CD4-positive, alpha-beta memory T cell (primary cell): ENCODE measurements at regions of chr15 and their contacts with region 1.

Region 1: GRCh38 chr15:59688841-59689625 is at the start of gene BNIP2:
- DNase-seq: peak; percentile 99 to 100 (median 99)
- H3K4me3 ChIP-seq: peak within 1 kb of the TSS; percentile 94 to 100
- H3K4me3 Mint-ChIP-seq: peak within 1 kb of the TSS; percentile 88 to 99 (median 94)
- H3K27ac ChIP-seq: peak within 1 kb of the TSS; percentile 100
- H3K27ac Mint-ChIP-seq: peak within 1 kb of the TSS; percentile 89 to 99 (median 99)
- H3K4me1 ChIP-seq: peaks cover 46% of the 10 kb centered on the region
- H3K4me1 Mint-ChIP-seq: peaks cover 29 to 61% (median 40%) of the 10 kb centered on the region in 4 donors
- H3K27me3 ChIP-seq: no peaks in the 10 kb centered on the region
- H3K27me3 Mint-ChIP-seq: no peaks in the 10 kb centered on the region
- total RNA-seq, gene BNIP2: 86.9 to 87.9 TPM

Region 2: GRCh38 chr15:58987489-58988005 is 701.5 kb before region 1 on chr15 and contains the start of gene RNF111:
- CTCF ChIA-PET with region 1: no interaction called
- POLR2A ChIA-PET with region 1: no interaction called
- intact Hi-C with region 1: loop called (anchors 10 kb)
- DNase-seq: peak; percentile 90 to 97 (median 91)
- H3K4me3 ChIP-seq: peak within 1 kb of the TSS; percentile 91 to 92
- H3K4me3 Mint-ChIP-seq: peak within 1 kb of the TSS; percentile 93 to 98 (median 96)
- H3K27ac ChIP-seq: peak within 1 kb of the TSS; percentile 89
- H3K27ac Mint-ChIP-seq: peak within 1 kb of the TSS; percentile 84 to 97 (median 94)
- H3K4me1 ChIP-seq: peaks cover 40% of the 10 kb centered on the region
- H3K4me1 Mint-ChIP-seq: peaks cover 31 to 52% (median 42%) of the 10 kb centered on the region in 4 donors
- H3K27me3 ChIP-seq: no peaks in the 10 kb centered on the region
- H3K27me3 Mint-ChIP-seq: no peaks in the 10 kb centered on the region
- total RNA-seq, gene RNF111: 54.9 to 60.9 TPM

Region 3: DNA sequence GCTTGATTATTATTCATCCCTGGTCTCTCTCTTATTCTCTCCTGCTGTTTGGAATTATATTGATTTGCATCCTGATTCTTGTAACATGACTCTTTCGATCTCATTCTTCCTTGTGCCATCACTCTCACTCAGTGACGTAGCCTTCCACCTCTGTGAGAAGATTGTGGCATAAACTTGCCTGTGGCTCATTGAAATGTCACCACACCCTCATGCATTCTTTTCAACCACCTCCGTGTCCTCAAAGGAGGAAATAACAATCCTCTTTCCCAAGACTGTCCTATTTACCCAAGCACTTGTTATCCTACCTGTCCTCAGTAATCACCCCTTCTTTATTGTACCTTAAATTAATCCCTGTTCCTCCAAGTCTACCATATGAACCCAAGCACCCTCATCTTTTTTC is 118.7 kb before region 1 on chr15:
- CTCF ChIA-PET with region 1: no interaction called
- POLR2A ChIA-PET with region 1: no interaction called
- intact Hi-C with region 1: no loop called
- DNase-seq: no peak
- H3K4me3 ChIP-seq: no peak overlapping the region
- H3K4me3 Mint-ChIP-seq: no peak overlapping the region
- H3K27ac ChIP-seq: no peak overlapping the region
- H3K27ac Mint-ChIP-seq: peak overlapping the region in 1 of 7 donors; percentile 29
- H3K4me1 ChIP-seq: no peaks in the 10 kb centered on the region
- H3K4me1 Mint-ChIP-seq: no peaks in the 10 kb centered on the region
- H3K27me3 ChIP-seq: no peaks in the 10 kb centered on the region
- H3K27me3 Mint-ChIP-seq: peaks cover 4 to 8% of the 10 kb centered on the region in 2 donors

Region 4: DNA sequence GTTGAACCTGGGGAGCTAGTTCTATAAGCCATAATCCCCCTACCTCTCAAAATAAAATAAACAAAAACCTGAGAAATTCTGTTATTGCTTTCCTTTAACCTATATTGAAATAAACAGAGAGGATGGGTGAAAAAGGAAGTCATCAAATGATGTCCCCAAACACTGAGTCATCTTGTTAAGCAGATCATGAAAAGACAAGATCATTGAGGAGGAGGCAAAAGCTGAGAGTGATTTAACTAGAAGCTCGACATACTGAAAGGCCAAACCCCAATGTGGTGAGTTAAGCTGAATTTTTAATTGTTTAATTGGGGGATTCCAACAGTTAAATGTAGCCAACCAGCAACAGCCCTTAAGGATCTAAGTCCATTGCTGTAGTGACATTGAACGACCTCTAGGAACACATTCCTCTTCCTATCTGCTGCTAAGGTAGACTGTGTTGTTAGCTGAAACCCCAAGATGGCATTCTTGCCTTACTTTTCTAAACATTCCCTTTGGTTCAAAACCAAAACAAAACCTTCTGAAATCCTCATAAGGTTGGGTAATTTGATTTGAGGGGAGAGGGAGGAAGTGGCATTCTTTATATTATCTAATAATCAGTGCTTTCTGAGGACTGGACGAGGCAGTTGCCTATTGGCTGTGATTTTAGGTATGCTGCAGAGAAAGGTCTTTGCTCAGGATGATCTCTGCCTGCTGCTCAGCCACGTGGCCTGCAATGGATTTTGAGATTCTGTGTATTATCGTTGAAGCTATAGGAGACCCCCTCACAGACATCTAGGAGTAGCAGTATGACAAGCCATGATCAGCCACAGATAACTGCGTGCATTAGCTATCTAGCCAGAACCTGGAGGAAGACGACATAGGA is 62.8 kb after region 1 on chr15:
- CTCF ChIA-PET with region 1: interaction called, 5 read pairs
- POLR2A ChIA-PET with region 1: no interaction called
- intact Hi-C with region 1: loop called (anchors 2 kb)
- DNase-seq: peak; percentile 44 to 76 (median 70)
- H3K4me3 ChIP-seq: no peak overlapping the region
- H3K4me3 Mint-ChIP-seq: peak overlapping the region in 3 of 8 donors; percentile 3 to 35 (median 13)
- H3K27ac ChIP-seq: no peak overlapping the region
- H3K27ac Mint-ChIP-seq: peak overlapping the region in 5 of 7 donors; percentile 5 to 70 (median 61)
- H3K4me1 ChIP-seq: peaks cover 10% of the 10 kb centered on the region
- H3K4me1 Mint-ChIP-seq: peaks cover 10 to 16% (median 13%) of the 10 kb centered on the region in 4 donors
- H3K27me3 ChIP-seq: no peaks in the 10 kb centered on the region
- H3K27me3 Mint-ChIP-seq: peaks cover 7 to 12% of the 10 kb centered on the region in 2 donors

Region 5: GRCh38 chr15:59764775-59765174 is 75.7 kb after region 1 on chr15:
- CTCF ChIA-PET with region 1: no interaction called
- POLR2A ChIA-PET with region 1: no interaction called
- intact Hi-C with region 1: no loop called
- DNase-seq: no peak
- H3K4me3 ChIP-seq: no peak overlapping the region
- H3K4me3 Mint-ChIP-seq: no peak overlapping the region
- H3K27ac ChIP-seq: no peak overlapping the region
- H3K27ac Mint-ChIP-seq: no peak overlapping the region
- H3K4me1 ChIP-seq: no peaks in the 10 kb centered on the region
- H3K4me1 Mint-ChIP-seq: peaks cover 0 to 7% (median 3%) of the 10 kb centered on the region in 4 donors
- H3K27me3 ChIP-seq: no peaks in the 10 kb centered on the region
- H3K27me3 Mint-ChIP-seq: peaks cover 1% of the 10 kb centered on the region in 2 donors

Region 6: DNA sequence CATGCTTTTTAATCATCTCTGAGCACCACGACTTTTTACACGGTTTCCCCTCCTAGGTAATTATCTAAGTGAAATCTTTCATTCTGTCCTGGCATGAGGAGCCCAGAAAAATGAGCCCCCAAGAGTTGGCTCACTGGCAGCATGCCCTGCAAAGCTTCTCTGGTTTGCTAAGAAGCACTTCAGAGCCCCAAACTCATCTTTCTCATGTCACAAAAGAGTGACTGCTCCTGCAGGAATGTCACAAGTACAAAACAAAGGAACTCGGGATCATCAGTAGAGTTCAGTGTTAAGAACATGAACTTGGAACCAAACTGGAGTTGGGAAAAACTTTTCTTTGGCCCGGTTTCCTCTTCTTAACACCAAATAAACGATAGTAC is 439.0 kb after region 1 on chr15:
- CTCF ChIA-PET with region 1: interaction called, 5 read pairs
- POLR2A ChIA-PET with region 1: no interaction called
- intact Hi-C with region 1: loop called (anchors 1 kb)
- DNase-seq: no peak
- H3K4me3 ChIP-seq: peak overlapping the region; percentile 56 to 81
- H3K4me3 Mint-ChIP-seq: peak overlapping the region; percentile 74 to 94 (median 92)
- H3K27ac ChIP-seq: peak overlapping the region; percentile 58
- H3K27ac Mint-ChIP-seq: peak overlapping the region; percentile 92 to 97 (median 96)
- H3K4me1 ChIP-seq: peaks cover 28% of the 10 kb centered on the region
- H3K4me1 Mint-ChIP-seq: peaks cover 19 to 45% (median 33%) of the 10 kb centered on the region in 4 donors
- H3K27me3 ChIP-seq: no peaks in the 10 kb centered on the region
- H3K27me3 Mint-ChIP-seq: no peaks in the 10 kb centered on the region

Region 7: GRCh38 chr15:60397772-60398445 is 708.9 kb after region 1 on chr15 and contains the start of gene ANXA2:
- CTCF ChIA-PET with region 1: no interaction called
- POLR2A ChIA-PET with region 1: interaction called, 14 read pairs
- intact Hi-C with region 1: loop called (anchors 1 kb)
- DNase-seq: peak; percentile 82 to 91 (median 83)
- H3K4me3 ChIP-seq: peak within 1 kb of the TSS; percentile 59 to 86
- H3K4me3 Mint-ChIP-seq: peak within 1 kb of the TSS; percentile 92 to 98 (median 94)
- H3K27ac ChIP-seq: peak within 1 kb of the TSS; percentile 75
- H3K27ac Mint-ChIP-seq: peak within 1 kb of the TSS; percentile 96 to 100 (median 98)
- H3K4me1 ChIP-seq: peaks cover 60% of the 10 kb centered on the region
- H3K4me1 Mint-ChIP-seq: peaks cover 27 to 64% (median 49%) of the 10 kb centered on the region in 4 donors
- H3K27me3 ChIP-seq: no peaks in the 10 kb centered on the region
- H3K27me3 Mint-ChIP-seq: peaks cover 0 to 7% of the 10 kb centered on the region in 2 donors
- total RNA-seq, gene ANXA2: 148 to 160 TPM

Region 8: DNA sequence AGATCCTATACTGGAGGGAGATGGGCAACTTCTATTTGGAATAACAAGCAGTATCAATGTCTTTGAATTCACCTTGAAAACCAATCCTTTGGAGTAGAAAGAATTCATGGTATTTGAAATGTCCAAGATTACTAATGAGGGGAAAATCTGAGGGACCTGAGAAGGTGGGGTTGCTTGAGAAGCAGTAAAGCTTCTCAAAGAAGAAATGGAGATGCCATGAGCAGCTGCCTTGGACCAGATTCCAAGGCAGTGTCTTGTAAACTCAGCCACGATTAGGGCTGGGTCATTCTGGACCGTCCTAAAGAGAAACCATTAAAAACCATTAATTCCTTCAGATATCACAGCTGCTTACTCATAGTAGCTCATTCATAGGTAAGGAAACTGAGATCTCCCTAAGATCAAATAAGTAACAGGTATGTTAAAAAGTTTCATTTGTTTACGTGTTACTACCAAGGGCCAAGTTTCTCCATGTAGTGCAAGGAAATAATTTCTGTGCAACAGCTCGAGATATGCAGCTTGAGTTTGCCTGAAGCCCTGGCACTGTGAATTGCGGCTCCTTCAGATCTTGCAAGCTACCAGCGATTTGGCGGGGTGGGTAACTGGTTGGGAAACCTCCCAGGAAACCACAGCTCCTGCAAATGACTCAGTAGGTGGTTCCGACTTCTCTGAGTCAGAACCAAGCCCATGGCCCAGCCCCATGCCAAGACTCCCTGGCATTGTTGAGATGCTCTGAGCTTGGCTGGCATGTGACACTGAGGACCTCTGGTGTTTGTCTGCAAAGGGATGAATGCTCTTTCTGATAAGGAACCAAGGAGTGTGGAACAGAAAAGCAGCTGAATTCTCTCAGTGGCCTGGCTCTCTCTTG is 1243.2 kb after region 1 on chr15:
- CTCF ChIA-PET with region 1: interaction called, 6 read pairs
- POLR2A ChIA-PET with region 1: interaction called, 4 read pairs
- intact Hi-C with region 1: loop called (anchors 5 kb)
- DNase-seq: peak; percentile 52 to 86 (median 61)
- H3K4me3 ChIP-seq: no peak overlapping the region
- H3K4me3 Mint-ChIP-seq: peak overlapping the region in 6 of 8 donors; percentile 5 to 65 (median 31)
- H3K27ac ChIP-seq: no peak overlapping the region
- H3K27ac Mint-ChIP-seq: peak overlapping the region in 4 of 7 donors; percentile 8 to 57 (median 55)
- H3K4me1 ChIP-seq: peaks cover 14% of the 10 kb centered on the region
- H3K4me1 Mint-ChIP-seq: peaks cover 9 to 25% (median 14%) of the 10 kb centered on the region in 4 donors
- H3K27me3 ChIP-seq: no peaks in the 10 kb centered on the region
- H3K27me3 Mint-ChIP-seq: no peaks in the 10 kb centered on the region